Right cardiac atrium (tissue), 5 donors: ENCODE measurements at regions of chr2 and their contacts with region 1.

Region 1: GRCh38 chr2:101400048-101400447 is 12.7 kb upstream of the CREG2 start:
- DNase-seq: no peak
- ATAC-seq: no peak
- H3K4me3 ChIP-seq: no peak overlapping the region
- H3K27ac ChIP-seq: no peak overlapping the region
- H3K4me1 ChIP-seq: no peaks in the 10 kb centered on the region
- H3K27me3 ChIP-seq: no peaks in the 10 kb centered on the region

Region 2: DNA sequence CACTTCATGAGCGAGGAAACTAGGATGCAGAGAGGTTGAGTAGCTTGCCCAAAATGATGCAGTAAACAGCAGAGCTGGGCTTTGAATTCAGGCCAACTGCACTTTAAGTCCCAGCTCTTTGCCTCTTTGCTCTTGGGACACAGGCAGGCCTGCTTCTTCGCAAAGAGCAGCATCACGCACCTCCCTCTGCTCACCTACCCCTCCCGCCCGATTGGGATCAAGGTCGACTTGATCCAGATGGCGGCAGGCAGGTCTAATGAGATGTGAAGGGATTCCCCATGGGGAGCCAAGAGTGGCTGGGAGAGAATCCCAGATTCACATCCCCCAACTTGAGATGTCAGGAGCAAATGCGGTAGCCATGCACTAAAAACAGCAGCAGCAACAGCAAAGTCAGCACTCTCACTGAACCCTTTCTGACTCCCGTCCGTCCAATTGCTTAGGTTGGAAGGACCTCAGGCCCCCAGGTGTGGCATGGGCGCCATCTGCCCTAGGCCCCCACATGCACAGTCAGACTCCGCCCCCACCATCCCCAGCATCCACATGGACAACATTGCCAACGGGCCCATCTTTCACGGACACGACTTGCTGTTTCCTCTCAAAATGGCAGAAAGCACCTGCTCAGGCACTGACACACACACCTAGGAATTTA is 213.1 kb after region 1 on chr2:
- intact Hi-C with region 1: no loop called
- DNase-seq: no peak
- ATAC-seq: no peak
- H3K4me3 ChIP-seq: no peak overlapping the region
- H3K27ac ChIP-seq: no peak overlapping the region
- H3K4me1 ChIP-seq: no peaks in the 10 kb centered on the region
- H3K27me3 ChIP-seq: no peaks in the 10 kb centered on the region

Region 3: GRCh38 chr2:101679801-101680487 is 279.9 kb after region 1 on chr2:
- intact Hi-C with region 1: loop called in 1 of 4 experiments (anchors 10 kb)
- DNase-seq: no peak
- ATAC-seq: no peak
- H3K4me3 ChIP-seq: no peak overlapping the region
- H3K27ac ChIP-seq: no peak overlapping the region
- H3K4me1 ChIP-seq: no peaks in the 10 kb centered on the region
- H3K27me3 ChIP-seq: no peaks in the 10 kb centered on the region